ENCODE measurements at regions of chr10 and their contacts with region 1.

Region 1: GRCh38 chr10:99732033-99732912 is at the starts of genes COX15 and CUTC:
- DNase-seq: peak; percentile 95
- H3K4me3 ChIP-seq: peak within 1 kb of the TSS; percentile 67 to 78 (median 74)
- H3K27ac ChIP-seq: peak within 1 kb of the TSS; percentile 83
- H3K4me1 ChIP-seq: peaks cover 13% of the 10 kb centered on the region
- H3K27me3 ChIP-seq: no peaks in the 10 kb centered on the region
- CTCF ChIP-seq: peak; percentile 43 to 63
- total RNA-seq, gene COX15: 26.5 to 29.5 TPM
- total RNA-seq, gene CUTC: 8.2 to 14.7 TPM

Region 2: DNA sequence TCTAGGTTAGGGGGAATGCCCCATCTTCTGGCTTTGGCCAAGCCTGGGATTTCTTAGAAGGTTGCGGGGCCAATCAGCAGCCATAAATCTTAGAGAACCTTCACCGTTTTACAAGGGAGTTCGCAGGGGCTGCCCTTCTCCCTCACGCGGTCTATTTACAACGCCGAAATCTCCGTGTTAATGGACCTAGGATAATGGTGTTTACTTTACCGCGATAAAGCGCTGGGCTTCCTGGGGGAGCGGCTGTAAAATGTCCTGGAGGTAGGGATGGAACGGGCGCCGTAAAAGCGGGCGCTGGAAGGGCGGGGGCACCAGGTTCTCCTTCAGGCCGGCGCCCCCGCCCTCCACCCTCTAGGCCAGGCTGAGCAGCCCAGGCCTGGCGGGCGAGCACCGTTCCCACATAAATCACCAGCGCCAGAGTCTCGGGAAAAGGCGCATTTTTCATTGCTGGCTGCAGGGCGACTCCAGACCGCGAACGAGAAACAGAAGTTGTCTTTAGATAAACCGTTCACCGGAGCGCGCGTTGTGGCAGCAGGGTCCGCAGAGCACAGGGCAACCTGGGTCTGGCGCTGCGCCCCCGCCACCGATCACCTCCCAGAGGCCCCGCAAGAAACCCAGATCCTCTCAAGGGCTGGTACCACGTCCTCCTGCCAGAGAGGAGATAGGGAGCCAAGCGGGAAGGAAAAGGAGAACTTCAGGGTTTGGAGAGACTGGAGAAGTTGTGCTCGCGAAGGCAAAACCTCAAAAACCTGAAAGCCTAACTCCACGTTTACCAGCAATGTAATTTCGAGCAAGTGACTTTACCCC is 212.0 kb before region 1 on chr10:
- CTCF ChIA-PET with region 1: no interaction called
- dilution Hi-C with region 1: no loop called
- in situ Hi-C with region 1: no loop called
- intact Hi-C with region 1: no loop called
- DNase-seq: no peak
- H3K4me3 ChIP-seq: no peak overlapping the region
- H3K27ac ChIP-seq: no peak overlapping the region
- H3K4me1 ChIP-seq: no peaks in the 10 kb centered on the region
- H3K27me3 ChIP-seq: peaks cover 49% of the 10 kb centered on the region
- CTCF ChIP-seq: no peak

Region 3: DNA sequence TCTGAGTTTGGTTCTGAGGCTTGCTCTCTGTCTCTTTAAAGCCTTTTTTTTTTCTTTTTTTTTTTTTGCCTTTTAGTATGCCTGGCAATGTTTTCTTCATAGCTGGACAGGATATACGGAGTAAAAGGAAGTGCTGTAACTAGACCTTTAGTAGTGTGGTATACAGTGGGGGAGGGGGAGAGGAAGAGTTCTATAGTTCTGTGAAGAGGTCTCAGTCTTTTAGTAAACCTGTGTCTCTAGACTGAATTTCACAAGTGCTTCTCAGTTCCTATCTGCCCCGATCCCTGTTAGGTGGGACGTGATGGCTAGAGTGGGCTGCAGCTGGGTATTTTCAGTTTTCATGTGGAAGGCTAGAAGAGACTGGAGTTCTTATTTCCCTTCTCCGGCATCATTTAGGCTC is 47.1 kb after region 1 on chr10:
- CTCF ChIA-PET with region 1: interaction called, 3 read pairs
- dilution Hi-C with region 1: no loop called
- in situ Hi-C with region 1: no loop called
- intact Hi-C with region 1: loop called (anchors 1 kb)
- DNase-seq: peak; percentile 51
- H3K4me3 ChIP-seq: peak overlapping the region; percentile 21 to 31 (median 31)
- H3K27ac ChIP-seq: peak overlapping the region; percentile 97
- H3K4me1 ChIP-seq: peaks cover 70% of the 10 kb centered on the region
- H3K27me3 ChIP-seq: no peaks in the 10 kb centered on the region
- CTCF ChIP-seq: no peak

Region 4: GRCh38 chr10:99854860-99855259 is 122.6 kb after region 1 on chr10:
- CTCF ChIA-PET with region 1: interaction called, 12 read pairs
- dilution Hi-C with region 1: no loop called
- in situ Hi-C with region 1: no loop called
- intact Hi-C with region 1: no loop called
- DNase-seq: no peak
- H3K4me3 ChIP-seq: no peak overlapping the region
- H3K27ac ChIP-seq: no peak overlapping the region
- H3K4me1 ChIP-seq: no peaks in the 10 kb centered on the region
- H3K27me3 ChIP-seq: no peaks in the 10 kb centered on the region
- CTCF ChIP-seq: peak in 1 of 2 donors; percentile 2

Region 5: DNA sequence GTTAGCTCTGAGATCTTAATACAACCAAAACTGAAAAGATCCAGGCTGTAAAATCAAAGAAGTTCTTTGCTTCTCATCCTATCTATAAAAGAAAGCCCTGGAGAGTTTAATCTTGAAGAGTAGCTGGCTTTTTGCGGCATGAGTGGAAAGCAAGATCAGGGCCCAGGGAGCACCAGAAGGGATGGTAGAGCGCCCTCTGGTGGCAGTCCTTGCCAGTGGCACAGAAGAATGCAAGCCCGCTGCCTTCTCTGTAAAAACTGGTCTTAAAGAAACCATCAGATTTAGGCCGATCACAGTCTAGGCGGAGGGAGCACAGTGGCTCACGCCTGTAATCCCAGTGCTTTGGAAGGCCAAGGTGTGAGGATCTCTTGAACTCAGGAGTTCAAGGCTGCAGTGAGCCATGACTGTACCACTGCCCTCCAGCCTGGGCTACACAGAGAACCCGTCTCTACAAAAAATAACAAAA is 313.8 kb after region 1 on chr10:
- CTCF ChIA-PET with region 1: interaction called, 5 read pairs
- dilution Hi-C with region 1: no loop called
- in situ Hi-C with region 1: no loop called
- intact Hi-C with region 1: loop called (anchors 1 kb)
- DNase-seq: peak; percentile 69
- H3K4me3 ChIP-seq: no peak overlapping the region
- H3K27ac ChIP-seq: no peak overlapping the region
- H3K4me1 ChIP-seq: peaks cover 29% of the 10 kb centered on the region
- H3K27me3 ChIP-seq: no peaks in the 10 kb centered on the region
- CTCF ChIP-seq: peak; percentile 95 to 96

Region 6: DNA sequence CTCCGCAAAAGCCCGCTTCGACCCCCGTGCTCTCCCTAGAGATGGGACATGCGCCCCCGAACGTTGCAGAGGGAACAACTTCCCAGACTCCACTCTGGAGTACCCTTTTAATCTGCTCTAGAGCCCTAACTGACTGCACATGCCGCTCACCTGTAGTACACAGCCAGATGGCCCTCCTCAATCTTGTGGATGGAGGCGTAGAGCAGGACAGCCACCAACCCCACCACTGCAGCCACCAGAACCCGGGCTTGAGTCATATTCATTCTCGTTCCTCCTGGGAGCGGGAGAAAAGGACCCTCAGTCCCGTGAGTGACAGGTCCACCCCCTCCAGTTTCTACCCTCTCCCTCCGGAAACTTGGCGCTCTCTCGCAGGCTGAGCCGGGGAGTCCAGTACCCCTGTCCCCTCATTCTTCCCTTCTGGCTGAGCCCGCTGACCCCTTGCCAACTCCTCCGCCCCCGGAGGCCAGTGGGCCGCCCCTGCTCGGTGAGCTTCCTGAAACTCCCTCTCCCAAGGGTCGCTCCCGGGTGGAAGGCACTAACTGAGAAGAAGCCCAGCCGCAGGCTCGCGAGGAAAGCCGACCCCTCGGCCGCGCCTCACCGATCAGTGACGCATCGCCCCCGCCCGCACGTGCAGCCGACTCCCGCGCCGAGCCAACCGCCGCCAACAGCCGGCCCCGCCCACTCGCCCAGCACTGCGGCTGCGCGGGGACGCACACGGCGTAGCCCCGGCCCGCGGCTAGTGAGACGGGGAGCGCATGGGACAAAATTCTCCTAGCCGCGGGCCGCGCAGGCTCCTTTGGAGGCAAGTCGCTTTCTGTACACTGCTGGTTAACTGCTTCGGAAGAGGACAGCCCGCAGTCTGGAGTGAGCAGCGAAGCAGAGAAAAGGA is 453.3 kb after region 1 on chr10 and contains the start of gene ERLIN1:
- CTCF ChIA-PET with region 1: no interaction called
- dilution Hi-C with region 1: no loop called
- in situ Hi-C with region 1: no loop called
- intact Hi-C with region 1: loop called (anchors 10 kb)
- DNase-seq: peak; percentile 90
- H3K4me3 ChIP-seq: peak within 1 kb of the TSS; percentile 66 to 96 (median 85)
- H3K27ac ChIP-seq: peak within 1 kb of the TSS; percentile 95
- H3K4me1 ChIP-seq: peaks cover 24% of the 10 kb centered on the region
- H3K27me3 ChIP-seq: no peaks in the 10 kb centered on the region
- CTCF ChIP-seq: no peak
- total RNA-seq, gene ERLIN1: 31.5 to 44.3 TPM